Breast epithelium (tissue), 4 donors: ENCODE measurements at regions of chr11 and their contacts with region 1.

Region 1: GRCh38 chr11:34840736-34841386 is 75.3 kb downstream of the APIP start:
- DNase-seq: no peak
- H3K4me3 ChIP-seq: no peak overlapping the region
- H3K27ac ChIP-seq: no peak overlapping the region
- H3K4me1 ChIP-seq: no peaks in the 10 kb centered on the region
- H3K27me3 ChIP-seq: no peaks in the 10 kb centered on the region
- CTCF ChIP-seq: no peak
- POLR2A ChIP-seq: no peak

Region 2: DNA sequence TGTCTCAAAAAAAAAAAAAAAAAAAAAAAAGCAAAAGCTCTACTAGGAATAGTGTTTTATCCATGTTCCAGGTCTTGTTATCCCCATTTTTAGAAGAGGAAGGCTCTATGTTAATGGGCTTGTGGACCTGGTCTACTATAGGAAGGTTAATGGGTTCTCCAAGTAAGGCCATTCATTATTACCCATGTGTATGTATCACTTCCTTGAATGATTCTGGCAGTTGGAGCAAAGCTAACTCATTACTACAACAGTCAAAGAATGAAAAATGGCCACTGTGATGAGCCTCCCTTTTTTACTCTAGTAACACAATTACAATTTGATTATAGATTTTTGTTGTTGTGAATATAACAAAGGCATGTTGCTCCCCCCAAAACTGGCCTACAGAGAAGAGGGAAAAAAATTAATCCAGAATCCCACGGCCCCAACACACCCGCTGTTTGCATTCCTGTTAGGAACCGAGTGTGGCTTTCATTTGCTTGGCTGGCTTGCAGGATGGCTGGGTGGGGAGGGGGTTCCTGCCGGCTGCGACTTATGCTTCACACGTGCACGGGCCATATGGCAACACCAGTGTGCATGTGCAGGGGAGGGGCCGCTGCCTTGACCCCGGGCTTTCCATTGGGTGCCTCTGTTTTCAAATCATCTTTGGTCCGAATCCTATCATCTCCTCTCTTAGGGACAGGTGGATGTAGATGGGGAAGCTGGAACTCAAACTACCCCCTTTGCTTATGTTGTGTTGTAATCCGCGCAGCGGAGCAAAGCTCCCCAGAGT is 1434.8 kb before region 1 on chr11:
- intact Hi-C with region 1: loop called (anchors 5 kb)
- DNase-seq: no peak
- H3K4me3 ChIP-seq: no peak overlapping the region
- H3K27ac ChIP-seq: no peak overlapping the region
- H3K4me1 ChIP-seq: no peaks in the 10 kb centered on the region
- H3K27me3 ChIP-seq: no peaks in the 10 kb centered on the region
- CTCF ChIP-seq: no peak
- POLR2A ChIP-seq: no peak

Region 3: DNA sequence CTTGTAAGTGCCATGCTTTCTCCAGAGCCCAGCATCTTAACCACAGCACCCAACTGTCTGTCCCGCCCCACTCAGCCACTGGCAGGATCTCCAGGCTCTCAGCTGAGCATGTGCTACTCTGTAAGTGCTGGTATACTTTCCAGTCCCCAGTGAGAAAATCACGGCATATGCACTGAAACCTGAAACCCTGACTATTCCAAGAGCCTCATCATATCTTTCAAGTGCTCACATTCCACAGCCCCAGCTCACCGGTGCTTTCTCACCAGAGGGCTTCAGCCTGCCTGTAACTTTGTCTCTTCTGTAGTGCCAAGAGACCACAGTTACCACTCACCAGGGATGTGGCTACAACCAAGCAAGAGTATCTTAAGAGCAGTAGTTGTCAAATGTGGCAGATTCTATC is 708.9 kb after region 1 on chr11:
- intact Hi-C with region 1: no loop called
- DNase-seq: no peak
- H3K4me3 ChIP-seq: no peak overlapping the region
- H3K27ac ChIP-seq: no peak overlapping the region
- H3K4me1 ChIP-seq: no peaks in the 10 kb centered on the region
- H3K27me3 ChIP-seq: no peaks in the 10 kb centered on the region
- CTCF ChIP-seq: no peak
- POLR2A ChIP-seq: no peak